Activated T-helper 1 cell treated with anti-CD3 and anti-CD28 coated beads, Interleukin-12 subunit alpha, Interleukin-12 subunit beta, Interleukin-2, Interleukin-4 antibody, amounts not matched to agents 30 ng/mL and 10 ng/mL and 1 ng/mL, durations not matched to agents 14 hours and 24 hours and 36 hours (primary cell): ENCODE measurements at regions of chr6 and their contacts with region 1.

Region 1: DNA sequence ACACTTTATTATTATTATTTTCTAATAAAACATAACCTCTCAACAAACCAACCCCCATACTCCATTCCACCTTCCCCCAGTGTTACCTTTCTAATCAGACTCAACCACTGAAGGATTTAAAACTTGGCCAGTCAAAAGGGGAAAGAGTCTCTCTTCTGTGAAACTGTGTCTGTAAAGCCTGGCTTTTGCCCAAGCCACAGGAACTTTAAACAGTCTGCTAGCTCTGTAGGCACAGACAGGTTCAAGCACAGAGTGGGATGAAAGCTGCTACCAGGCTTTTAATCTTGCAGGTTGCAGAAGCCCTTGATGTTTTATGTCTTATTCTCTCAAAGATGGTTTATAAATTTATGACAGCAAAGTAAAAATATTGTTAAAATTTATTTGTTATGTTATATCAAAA is 585.7 kb downstream of the TENT5A start:
- DNase-seq: no peak
- H3K4me3 Mint-ChIP-seq: no peak overlapping the region
- H3K27ac Mint-ChIP-seq: no peak overlapping the region
- H3K4me1 Mint-ChIP-seq: no peaks in the 10 kb centered on the region
- H3K27me3 Mint-ChIP-seq: no peaks in the 10 kb centered on the region

Region 2: DNA sequence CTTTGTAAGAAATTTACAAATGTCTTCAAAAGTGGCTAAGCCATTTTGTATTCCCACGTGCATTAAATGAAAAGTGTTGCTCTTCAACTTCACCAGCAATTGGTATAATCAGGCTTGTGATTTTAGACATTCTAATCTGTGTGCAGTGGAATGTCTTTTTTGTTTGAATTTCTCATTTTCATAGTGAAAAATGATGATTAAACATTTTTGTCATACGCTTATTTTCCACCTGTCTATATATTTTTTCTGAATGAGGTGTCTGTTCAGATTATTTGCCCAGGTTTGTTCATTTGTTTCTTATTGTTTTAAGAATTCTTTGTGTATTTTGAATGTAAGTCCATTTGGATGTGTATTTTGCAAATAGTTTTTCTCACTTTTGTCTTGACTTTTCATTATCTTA is 27.6 kb after region 1 on chr6:
- intact Hi-C with region 1: loop called (anchors 2 kb)
- DNase-seq: no peak
- H3K4me3 Mint-ChIP-seq: no peak overlapping the region
- H3K27ac Mint-ChIP-seq: no peak overlapping the region
- H3K4me1 Mint-ChIP-seq: no peaks in the 10 kb centered on the region
- H3K27me3 Mint-ChIP-seq: no peaks in the 10 kb centered on the region

Region 3: GRCh38 chr6:82775361-82775760 is 1608.6 kb after region 1 on chr6:
- intact Hi-C with region 1: no loop called
- DNase-seq: no peak
- H3K4me3 Mint-ChIP-seq: no peak overlapping the region
- H3K27ac Mint-ChIP-seq: no peak overlapping the region
- H3K4me1 Mint-ChIP-seq: no peaks in the 10 kb centered on the region
- H3K27me3 Mint-ChIP-seq: no peaks in the 10 kb centered on the region